Dorsolateral prefrontal cortex (tissue), 120 donors: ENCODE measurements at regions of chr4 and their contacts with region 1.

Region 1: GRCh38 chr4:114694770-114695169 is 96.2 kb downstream of the UGT8 start:
- DNase-seq: no peak
- H3K4me3 ChIP-seq: no peak overlapping the region
- H3K27ac ChIP-seq: peak overlapping the region in 24 of 59 donors; percentile 1 to 81 (median 46)
- H3K27me3 ChIP-seq: peaks cover 0 to 4% (median 0%) of the 10 kb centered on the region in 45 donors
- CTCF ChIP-seq: peak; percentile 62 to 92 (median 79)

Region 2: DNA sequence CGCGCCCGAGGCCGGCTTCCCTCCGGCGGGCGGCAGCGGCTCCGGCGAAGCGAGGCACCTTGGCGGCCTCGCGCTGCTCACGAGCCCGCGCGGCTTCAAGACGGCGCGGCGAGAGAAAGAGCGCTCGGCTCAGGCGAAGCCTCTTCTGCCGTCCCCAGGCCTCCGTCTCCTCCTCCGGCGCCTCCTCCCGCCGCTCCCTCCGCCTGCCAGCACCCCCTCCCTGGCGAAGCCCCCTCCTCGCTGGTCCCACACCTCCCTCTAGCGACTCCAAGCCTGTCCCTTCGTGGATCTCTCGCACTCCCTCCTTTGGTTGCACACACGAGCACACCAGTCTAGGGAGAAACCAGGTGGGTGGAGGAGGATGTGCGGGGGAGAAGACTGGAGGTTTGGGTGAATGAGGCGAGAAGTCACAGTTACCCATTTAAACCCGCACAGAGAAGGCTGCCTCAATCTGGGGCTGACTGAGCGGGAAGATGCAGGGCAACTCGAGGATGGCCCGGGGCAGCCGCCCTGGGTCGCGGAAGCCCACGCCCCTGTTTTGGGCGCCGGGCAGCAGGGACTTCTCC is 933.1 kb before region 1 on chr4 and contains the start of gene CAMK2D:
- intact Hi-C with region 1: loop called in 1 of 2 experiments (anchors 10 kb)
- DNase-seq: peak; percentile 67 to 94 (median 86)
- H3K4me3 ChIP-seq: peak within 1 kb of the TSS; percentile 53 to 95 (median 85)
- H3K27ac ChIP-seq: peak within 1 kb of the TSS; percentile 86 to 100 (median 99)
- H3K27me3 ChIP-seq: no peaks in the 10 kb centered on the region
- CTCF ChIP-seq: peak in 54 of 56 donors; percentile 31 to 80 (median 65)
- total RNA-seq, gene CAMK2D: 46.8 to 134 (median 89.2) TPM

Region 3: GRCh38 chr4:114509340-114509739 is 185.4 kb before region 1 on chr4:
- intact Hi-C with region 1: loop called (anchors 10 kb)
- DNase-seq: no peak
- H3K4me3 ChIP-seq: no peak overlapping the region
- H3K27ac ChIP-seq: peak overlapping the region in 5 of 59 donors; percentile 16 to 67 (median 52)
- H3K27me3 ChIP-seq: peaks cover 0 to 5% (median 0%) of the 10 kb centered on the region in 45 donors
- CTCF ChIP-seq: peak in 49 of 56 donors; percentile 24 to 73 (median 46)

Region 4: DNA sequence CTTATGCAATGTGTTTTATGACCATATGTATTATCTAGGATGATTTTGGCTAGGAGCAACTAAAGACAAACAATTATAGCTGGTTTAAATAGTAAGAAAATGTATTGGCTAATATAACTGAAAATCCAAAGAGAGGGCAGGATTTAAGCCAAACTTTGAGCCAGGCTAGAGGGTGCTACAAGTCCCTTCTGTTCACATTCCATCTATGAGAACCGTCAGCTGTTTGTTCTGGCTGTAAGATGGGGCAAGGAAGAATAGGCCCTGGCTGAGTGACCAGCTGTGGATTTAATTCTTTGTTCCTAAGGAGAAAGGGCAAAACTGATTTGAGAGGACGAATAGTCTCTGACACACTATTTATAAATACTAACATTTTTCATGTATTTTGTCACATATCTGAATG is 175.4 kb before region 1 on chr4:
- intact Hi-C with region 1: loop called in 1 of 2 experiments (anchors 10 kb)
- DNase-seq: no peak
- H3K4me3 ChIP-seq: no peak overlapping the region
- H3K27ac ChIP-seq: peak overlapping the region in 48 of 59 donors; percentile 4 to 81 (median 56)
- H3K27me3 ChIP-seq: no peaks in the 10 kb centered on the region
- CTCF ChIP-seq: peak in 31 of 56 donors; percentile 9 to 58 (median 31)